ENCODE measurements at regions of chr6 and their contacts with region 1.

Region 1: GRCh38 chr6:129598244-129599187 is 111.5 kb downstream of the ARHGAP18 start:
- DNase-seq: no peak
- H3K4me3 Mint-ChIP-seq: no peak overlapping the region
- H3K27ac Mint-ChIP-seq: no peak overlapping the region
- H3K4me1 Mint-ChIP-seq: no peaks in the 10 kb centered on the region
- H3K27me3 Mint-ChIP-seq: peaks cover 5% of the 10 kb centered on the region

Region 2: DNA sequence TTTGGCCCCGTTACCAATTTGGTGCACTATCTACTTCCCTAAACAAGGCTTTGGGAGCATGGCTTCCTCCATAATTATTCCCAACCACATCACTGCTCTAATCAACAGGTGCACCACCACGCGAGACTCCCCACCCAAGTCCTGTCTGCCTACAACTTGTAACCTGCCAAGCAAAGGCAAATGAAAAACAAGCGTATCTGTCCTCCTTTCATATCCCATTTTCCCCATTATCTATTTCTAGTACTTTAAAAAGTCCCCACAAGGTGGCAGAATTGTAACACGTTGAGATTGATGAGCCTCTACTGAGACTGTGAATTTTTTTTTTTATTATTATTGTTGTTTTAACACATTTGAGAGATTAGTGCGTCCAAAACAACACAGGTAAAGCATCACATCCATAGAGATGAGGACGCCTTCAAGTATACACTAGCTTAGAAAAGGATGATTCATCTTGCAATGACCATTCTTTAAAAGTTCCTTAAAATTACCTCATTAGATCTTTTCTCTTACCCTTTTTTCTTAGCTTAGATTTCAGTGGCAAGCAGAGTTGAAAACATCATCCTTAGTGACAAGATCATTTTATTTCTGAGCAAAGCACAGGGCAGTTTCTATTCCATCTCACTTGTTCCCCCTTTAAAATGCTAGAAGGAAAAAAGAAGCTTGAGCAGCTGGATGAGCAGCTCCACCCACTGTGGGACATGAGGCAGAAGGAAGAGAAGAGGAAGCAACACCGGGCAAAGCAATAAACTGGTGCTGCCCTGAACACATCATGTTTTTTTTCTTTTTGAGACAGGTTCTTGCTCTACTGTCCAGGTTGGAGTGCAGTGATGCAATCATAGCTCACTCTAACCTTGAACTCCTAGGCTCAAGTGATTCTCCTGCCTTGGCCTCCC is 99.3 kb before region 1 on chr6:
- CTCF ChIA-PET with region 1: interaction called, 11 read pairs
- DNase-seq: no peak
- H3K4me3 Mint-ChIP-seq: no peak overlapping the region
- H3K27ac Mint-ChIP-seq: no peak overlapping the region
- H3K4me1 Mint-ChIP-seq: peaks cover 28% of the 10 kb centered on the region
- H3K27me3 Mint-ChIP-seq: no peaks in the 10 kb centered on the region

Region 3: GRCh38 chr6:129513471-129513870 is 85.0 kb before region 1 on chr6:
- CTCF ChIA-PET with region 1: no interaction called
- DNase-seq: no peak
- H3K4me3 Mint-ChIP-seq: no peak overlapping the region
- H3K27ac Mint-ChIP-seq: no peak overlapping the region
- H3K4me1 Mint-ChIP-seq: no peaks in the 10 kb centered on the region
- H3K27me3 Mint-ChIP-seq: no peaks in the 10 kb centered on the region

Region 4: DNA sequence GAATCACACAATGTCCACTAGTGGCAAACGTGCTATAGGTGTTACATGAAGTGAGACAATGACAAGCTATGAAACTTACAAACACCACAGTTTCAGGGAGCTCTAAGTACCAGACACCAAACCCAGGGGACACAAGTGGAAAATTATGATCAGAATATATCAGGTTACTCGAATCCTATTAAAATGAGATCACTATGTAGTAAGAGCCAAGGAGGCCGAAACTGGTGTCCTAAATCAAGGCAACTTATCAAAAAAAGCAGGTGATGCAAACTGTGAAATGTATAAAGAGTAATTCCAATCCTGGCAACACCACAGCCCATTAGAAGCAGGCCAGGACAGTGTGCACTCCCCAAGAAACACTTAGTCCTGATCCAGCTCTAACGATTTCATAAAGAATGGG is 11.1 kb after region 1 on chr6:
- CTCF ChIA-PET with region 1: interaction called, 13 read pairs
- DNase-seq: no peak
- H3K4me3 Mint-ChIP-seq: no peak overlapping the region
- H3K27ac Mint-ChIP-seq: no peak overlapping the region
- H3K4me1 Mint-ChIP-seq: no peaks in the 10 kb centered on the region
- H3K27me3 Mint-ChIP-seq: no peaks in the 10 kb centered on the region

Region 5: DNA sequence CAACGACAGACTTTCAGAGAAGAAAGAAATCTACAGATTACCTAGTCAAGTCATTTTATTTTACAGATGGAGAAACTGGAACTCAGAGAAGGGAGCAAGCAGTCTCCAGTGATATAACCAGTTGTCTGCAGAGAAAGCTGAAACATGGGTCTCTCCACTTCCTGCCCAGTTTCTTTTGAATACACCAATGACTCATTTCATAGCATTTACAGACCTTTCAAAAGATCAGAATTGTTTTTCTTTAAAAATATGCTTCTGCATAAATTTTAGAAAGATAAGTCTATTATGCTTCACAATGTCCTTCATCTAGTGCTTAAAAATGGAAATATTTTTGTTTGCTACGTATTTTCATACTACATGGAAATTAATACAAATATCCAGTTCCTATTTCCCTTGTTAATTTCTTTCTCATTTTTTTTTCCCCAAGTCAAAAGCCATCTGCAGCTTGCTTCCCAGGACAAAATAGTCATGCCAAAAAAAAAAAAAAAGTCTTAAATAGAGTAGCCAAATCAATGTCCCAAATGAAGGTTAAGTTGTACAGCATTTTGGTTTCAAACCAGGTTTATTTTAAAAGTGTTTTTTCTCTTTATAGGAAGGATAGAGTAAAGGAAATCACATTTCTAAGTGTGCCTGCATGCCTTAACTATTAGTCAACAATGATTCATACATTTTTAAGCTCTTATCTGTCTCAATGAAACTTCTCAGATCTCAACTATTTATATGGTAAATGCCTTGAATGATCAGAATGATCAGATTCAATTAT is 74.5 kb after region 1 on chr6:
- CTCF ChIA-PET with region 1: interaction called, 14 read pairs
- DNase-seq: peak; percentile 35
- H3K4me3 Mint-ChIP-seq: peak overlapping the region; percentile 59
- H3K27ac Mint-ChIP-seq: peak overlapping the region; percentile 94
- H3K4me1 Mint-ChIP-seq: peaks cover 66% of the 10 kb centered on the region
- H3K27me3 Mint-ChIP-seq: peaks cover 3% of the 10 kb centered on the region

Region 6: GRCh38 chr6:129725341-129725740 is 126.8 kb after region 1 on chr6:
- CTCF ChIA-PET with region 1: interaction called, 159 read pairs
- DNase-seq: no peak
- H3K4me3 Mint-ChIP-seq: no peak overlapping the region
- H3K27ac Mint-ChIP-seq: no peak overlapping the region
- H3K4me1 Mint-ChIP-seq: peaks cover 4% of the 10 kb centered on the region
- H3K27me3 Mint-ChIP-seq: no peaks in the 10 kb centered on the region

Region 7: DNA sequence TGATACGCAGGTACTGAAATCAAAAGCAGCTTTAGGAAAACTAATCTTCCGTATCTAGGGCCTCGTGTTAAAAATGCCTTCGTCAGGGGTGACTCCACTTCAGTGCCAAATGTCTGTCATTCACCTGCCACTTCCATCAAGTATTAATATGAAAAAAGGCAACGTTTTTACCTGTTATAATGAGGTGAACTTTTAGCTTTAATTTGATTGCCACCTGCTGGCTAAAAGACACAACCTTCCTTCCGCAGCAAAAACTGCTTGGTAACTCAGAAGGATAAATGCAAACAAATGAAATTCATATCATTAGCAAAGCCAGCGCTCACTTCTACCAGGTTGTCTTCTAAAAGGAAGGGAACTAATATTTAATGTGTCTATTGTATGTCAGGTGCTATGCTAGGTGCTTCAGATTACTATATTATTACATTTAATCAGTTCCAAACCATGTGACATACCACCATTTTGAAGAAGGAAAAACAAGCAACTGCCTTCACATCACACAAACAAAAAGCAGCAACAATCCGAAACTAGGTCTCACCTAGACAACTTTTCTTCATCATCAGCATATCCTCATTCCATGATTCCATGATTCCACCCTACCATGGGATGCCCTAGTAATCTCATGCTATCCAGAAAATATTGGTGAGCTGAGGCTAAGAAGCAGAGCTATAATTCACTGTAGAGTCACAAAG is 132.1 kb after region 1 on chr6:
- CTCF ChIA-PET with region 1: interaction called, 159 read pairs
- DNase-seq: peak; percentile 50
- H3K4me3 Mint-ChIP-seq: no peak overlapping the region
- H3K27ac Mint-ChIP-seq: no peak overlapping the region
- H3K4me1 Mint-ChIP-seq: peaks cover 8% of the 10 kb centered on the region
- H3K27me3 Mint-ChIP-seq: no peaks in the 10 kb centered on the region

Region 8: GRCh38 chr6:129774697-129775447 is 176.4 kb after region 1 on chr6:
- CTCF ChIA-PET with region 1: interaction called, 15 read pairs
- DNase-seq: peak; percentile 64
- H3K4me3 Mint-ChIP-seq: no peak overlapping the region
- H3K27ac Mint-ChIP-seq: no peak overlapping the region
- H3K4me1 Mint-ChIP-seq: peaks cover 9% of the 10 kb centered on the region
- H3K27me3 Mint-ChIP-seq: peaks cover 32% of the 10 kb centered on the region

Measured in activated naive CD4-positive, alpha-beta T cell treated with anti-CD3 and anti-CD28 coated beads, Interleukin-2, amount 10 ng/mL, durations not matched to agents 7 days and 5 days (primary cell).